ENCODE measurements at regions of chr10 and their contacts with region 1.

Region 1: DNA sequence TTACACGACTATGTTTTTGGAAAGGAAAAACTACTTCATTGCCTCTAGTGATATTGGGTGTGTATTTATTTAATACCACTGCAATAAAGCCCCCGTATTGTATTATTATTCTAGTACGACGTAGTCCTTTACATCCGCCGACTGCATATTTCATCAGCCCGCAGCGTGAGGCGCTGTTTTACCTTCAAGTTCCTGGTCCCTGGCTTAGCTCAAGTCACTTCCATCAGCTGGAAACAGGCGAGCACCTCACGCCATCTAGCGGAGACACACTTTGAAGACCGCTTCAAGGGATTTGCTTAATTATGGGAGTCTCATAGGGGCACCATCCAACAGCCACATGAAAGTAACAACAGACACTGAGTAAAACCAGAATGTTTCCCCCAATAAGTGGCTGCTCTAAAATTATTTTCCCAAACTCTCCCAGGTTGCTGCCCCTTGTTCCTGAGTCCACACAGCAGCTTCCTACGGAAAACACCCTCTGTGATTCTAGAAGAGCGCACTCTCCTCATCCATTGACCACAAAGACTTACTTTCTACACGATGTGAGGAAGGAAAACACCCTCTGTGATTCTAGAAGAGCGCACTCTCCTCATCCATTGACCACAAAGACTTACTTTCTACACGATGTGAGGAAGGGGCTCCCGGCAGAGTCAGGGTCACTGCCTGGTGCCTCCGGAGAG is 15.7 kb upstream of the ITIH2 start:
- DNase-seq: peak; percentile 40
- H3K4me3 ChIP-seq: no peak overlapping the region
- H3K27ac ChIP-seq: no peak overlapping the region
- H3K4me1 ChIP-seq: no peaks in the 10 kb centered on the region
- H3K27me3 ChIP-seq: no peaks in the 10 kb centered on the region
- CTCF ChIP-seq: peak; percentile 83 to 91 (median 86)

Region 2: GRCh38 chr10:7424315-7424714 is 263.1 kb before region 1 on chr10:
- dilution Hi-C with region 1: no loop called
- DNase-seq: no peak
- H3K4me3 ChIP-seq: no peak overlapping the region
- H3K27ac ChIP-seq: no peak overlapping the region
- H3K4me1 ChIP-seq: no peaks in the 10 kb centered on the region
- H3K27me3 ChIP-seq: peaks cover 3% of the 10 kb centered on the region
- CTCF ChIP-seq: no peak

Region 3: DNA sequence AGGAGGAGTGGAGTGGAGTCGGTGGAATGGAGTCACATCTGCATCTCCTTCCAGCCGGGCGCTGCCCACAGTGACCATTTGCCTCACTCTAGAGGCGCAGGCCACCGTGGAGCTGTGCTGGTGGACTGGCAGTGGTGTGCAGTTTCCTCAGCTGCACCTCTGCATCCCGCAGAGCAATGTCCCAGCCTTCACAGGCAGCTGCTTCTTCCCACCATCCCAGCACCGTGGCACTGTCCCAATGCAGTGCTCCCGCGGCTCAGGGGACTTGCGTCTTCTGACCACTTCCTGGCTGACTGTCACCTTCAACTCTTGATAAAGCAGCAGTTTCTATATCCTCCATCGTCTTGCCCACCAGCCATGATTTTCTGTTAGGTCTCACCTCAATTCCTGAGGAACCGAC is 186.2 kb before region 1 on chr10:
- dilution Hi-C with region 1: no loop called
- DNase-seq: no peak
- H3K4me3 ChIP-seq: no peak overlapping the region
- H3K27ac ChIP-seq: no peak overlapping the region
- H3K4me1 ChIP-seq: no peaks in the 10 kb centered on the region
- H3K27me3 ChIP-seq: no peaks in the 10 kb centered on the region
- CTCF ChIP-seq: no peak

Region 4: GRCh38 chr10:7529638-7530037 is 157.7 kb before region 1 on chr10:
- dilution Hi-C with region 1: loop called (anchors 10 kb)
- DNase-seq: no peak
- H3K4me3 ChIP-seq: no peak overlapping the region
- H3K27ac ChIP-seq: no peak overlapping the region
- H3K4me1 ChIP-seq: no peaks in the 10 kb centered on the region
- H3K27me3 ChIP-seq: peaks cover 7% of the 10 kb centered on the region
- CTCF ChIP-seq: peak; percentile 21 to 74 (median 43)

Region 5: GRCh38 chr10:7610651-7611389 is 76.5 kb before region 1 on chr10:
- dilution Hi-C with region 1: no loop called
- DNase-seq: no peak
- H3K4me3 ChIP-seq: no peak overlapping the region
- H3K27ac ChIP-seq: no peak overlapping the region
- H3K4me1 ChIP-seq: no peaks in the 10 kb centered on the region
- H3K27me3 ChIP-seq: no peaks in the 10 kb centered on the region
- CTCF ChIP-seq: no peak

Region 6: DNA sequence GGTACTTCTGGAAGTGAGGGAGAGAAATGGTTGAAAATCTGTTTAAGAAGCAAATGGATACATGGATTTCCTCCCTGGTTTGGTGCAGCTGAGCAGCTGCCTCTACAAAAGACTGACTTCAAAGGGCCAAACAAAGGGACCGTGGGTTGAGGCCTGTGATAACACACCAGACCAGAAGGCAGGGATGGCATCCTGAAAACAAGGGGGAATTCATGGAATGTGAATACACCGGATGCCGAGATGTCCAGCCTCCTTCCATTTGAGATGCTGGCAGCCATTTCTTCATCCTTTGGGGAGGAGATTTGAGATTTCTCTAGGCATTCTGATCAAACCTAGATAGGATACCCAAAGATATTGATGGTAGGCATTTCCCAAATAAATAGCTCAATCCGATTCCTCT is 167.8 kb after region 1 on chr10:
- dilution Hi-C with region 1: no loop called
- DNase-seq: no peak
- H3K4me3 ChIP-seq: no peak overlapping the region
- H3K27ac ChIP-seq: no peak overlapping the region
- H3K4me1 ChIP-seq: no peaks in the 10 kb centered on the region
- H3K27me3 ChIP-seq: no peaks in the 10 kb centered on the region
- CTCF ChIP-seq: no peak

Measured in keratinocyte (primary cell).